ENCODE measurements at regions of chr6 and their contacts with region 1.

Region 1: DNA sequence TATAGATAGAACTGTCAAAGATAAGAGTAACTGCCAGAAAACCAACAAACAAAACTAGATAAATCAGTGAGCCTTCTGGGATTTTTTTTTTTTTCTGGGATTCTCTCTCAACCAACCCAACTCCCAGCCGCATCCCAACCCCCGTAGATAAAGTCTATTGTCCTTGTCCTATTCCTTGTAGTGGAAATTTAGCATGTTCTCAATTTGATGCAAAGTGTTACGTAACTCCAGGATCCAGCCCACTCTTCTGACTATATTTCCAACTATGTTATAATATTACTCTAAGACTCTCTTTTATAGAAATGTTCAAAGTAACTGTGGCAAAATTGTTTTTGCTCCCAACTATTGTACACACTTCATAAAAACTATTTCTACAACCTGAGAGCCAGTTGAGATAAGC is 15.4 kb upstream of the CDYL start:
- DNase-seq: no peak
- ATAC-seq: no peak
- H3K4me3 ChIP-seq: no peak overlapping the region
- H3K27ac ChIP-seq: no peak overlapping the region
- H3K4me1 ChIP-seq: no peaks in the 10 kb centered on the region
- H3K27me3 ChIP-seq: no peaks in the 10 kb centered on the region
- CTCF ChIP-seq: no peak
- POLR2A ChIP-seq: no peak

Region 2: DNA sequence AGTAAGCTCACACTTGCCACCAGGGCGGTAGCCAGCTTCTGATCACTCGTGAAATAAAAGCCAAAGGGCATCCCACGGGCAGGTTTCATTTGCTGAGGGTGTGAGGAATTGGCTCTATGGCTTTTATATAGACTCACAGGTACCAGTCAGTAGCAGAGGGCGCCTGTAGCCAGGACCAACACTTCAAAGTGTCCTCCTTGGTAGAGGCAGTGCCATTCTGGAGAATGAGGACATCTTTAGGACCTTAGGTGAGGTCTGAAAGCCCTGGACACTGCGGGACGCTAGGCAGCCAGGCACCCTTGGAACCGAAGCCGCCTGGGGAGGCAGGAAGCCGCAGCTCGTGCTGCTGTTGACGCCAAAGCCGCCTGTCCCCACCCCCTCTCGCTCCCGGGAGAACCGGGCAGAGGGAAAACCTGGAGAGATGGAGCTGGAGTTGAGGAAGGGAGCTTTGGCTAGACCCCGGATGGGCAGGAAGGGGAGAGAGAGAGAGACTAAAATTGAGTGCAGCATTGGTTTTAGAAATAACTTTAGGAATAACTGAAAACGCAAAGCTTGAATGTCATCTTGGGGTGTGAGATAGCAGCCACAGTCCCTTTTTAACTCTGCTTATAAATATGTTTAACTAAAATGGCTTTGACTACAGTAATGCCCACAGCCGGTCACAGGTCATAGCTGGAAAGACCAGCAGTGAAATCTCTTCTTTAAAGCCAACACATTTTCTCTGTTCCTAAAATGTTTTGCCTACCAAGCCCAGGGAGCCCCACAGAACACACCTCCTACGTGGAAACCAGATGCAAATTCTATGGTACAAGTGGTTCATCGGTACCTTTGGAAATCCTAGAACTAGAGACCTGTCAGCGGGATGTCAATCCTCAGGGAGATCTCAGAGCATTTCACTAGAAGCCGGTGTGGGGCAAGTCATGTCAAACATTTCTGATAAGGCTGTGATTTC is 113.1 kb before region 1 on chr6:
- intact Hi-C with region 1: loop called (anchors 10 kb)
- DNase-seq: peak; percentile 81 to 85 (median 84)
- ATAC-seq: peak; percentile 97
- H3K4me3 ChIP-seq: no peak overlapping the region
- H3K27ac ChIP-seq: peak overlapping the region in 3 of 4 donors; percentile 19 to 54 (median 37)
- H3K4me1 ChIP-seq: peaks cover 14% of the 10 kb centered on the region
- H3K27me3 ChIP-seq: no peaks in the 10 kb centered on the region
- CTCF ChIP-seq: no peak
- POLR2A ChIP-seq: peak in 2 of 3 donors; percentile 47 to 57

Region 3: DNA sequence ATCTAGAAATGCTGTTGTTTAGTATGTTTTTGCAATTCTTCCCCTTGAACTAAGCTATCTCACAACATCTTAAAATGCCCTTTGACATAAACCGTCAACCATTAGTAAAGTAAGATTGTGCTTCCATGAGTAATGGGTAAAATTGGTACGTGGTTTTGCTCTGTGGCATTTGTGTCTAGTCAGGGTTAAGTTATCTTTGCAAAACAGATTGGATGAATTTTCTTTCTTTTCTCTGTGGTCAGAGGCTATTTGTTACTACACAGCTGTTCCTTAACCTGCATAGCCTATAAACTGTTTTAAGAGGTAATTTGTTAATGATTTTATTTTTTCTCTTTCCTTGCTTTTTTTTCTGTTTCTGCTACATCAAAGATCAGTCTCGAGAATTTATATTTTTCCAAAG is 167.7 kb after region 1 on chr6:
- intact Hi-C with region 1: no loop called
- DNase-seq: no peak
- ATAC-seq: no peak
- H3K4me3 ChIP-seq: no peak overlapping the region
- H3K27ac ChIP-seq: no peak overlapping the region
- H3K4me1 ChIP-seq: no peaks in the 10 kb centered on the region
- H3K27me3 ChIP-seq: no peaks in the 10 kb centered on the region
- CTCF ChIP-seq: no peak
- POLR2A ChIP-seq: no peak

Measured in body of pancreas (tissue), 4 donors.